ENCODE measurements at regions of chr12 and their contacts with region 1.

Region 1: DNA sequence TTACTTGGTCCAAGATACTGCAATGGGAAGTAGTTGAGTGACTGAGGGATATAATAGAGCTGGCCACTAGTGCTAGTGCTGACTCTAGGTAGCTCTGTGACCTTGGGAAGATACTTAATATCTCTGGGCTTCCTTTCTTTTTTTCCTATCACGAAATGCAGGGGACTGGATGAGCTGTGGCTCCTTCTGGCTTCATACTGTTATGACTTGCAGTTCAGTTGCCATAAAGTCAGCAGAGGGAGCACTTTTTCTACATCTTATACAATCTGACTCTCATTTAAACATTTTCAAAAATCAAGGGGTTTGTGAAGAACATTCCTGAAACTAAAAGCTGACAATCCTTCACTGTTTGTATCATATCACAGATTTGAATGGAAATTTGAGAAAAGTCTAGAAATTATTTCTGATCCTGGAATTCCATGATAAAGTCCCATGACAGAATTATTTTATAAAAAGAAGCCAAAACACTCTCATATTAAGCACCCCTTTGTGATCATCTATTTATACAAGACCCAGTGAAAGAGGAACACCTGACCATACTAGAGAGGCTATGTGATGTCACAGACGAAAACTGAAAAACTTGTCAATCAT is 5.4 kb downstream of the BHLHE41 start:
- DNase-seq: peak; percentile 70
- ATAC-seq: no peak
- H3K4me3 ChIP-seq: no peak overlapping the region
- H3K4me3 Mint-ChIP-seq: peak overlapping the region; percentile 53
- H3K27ac ChIP-seq: peak overlapping the region in 1 of 2 donors; percentile 6
- H3K27ac Mint-ChIP-seq: peak overlapping the region; percentile 57
- H3K4me1 ChIP-seq: peaks cover 66 to 72% of the 10 kb centered on the region in 2 donors
- H3K4me1 Mint-ChIP-seq: peaks cover 74% of the 10 kb centered on the region
- H3K27me3 ChIP-seq: peaks cover 0 to 10% (median 0%) of the 10 kb centered on the region in 4 experiments
- H3K27me3 Mint-ChIP-seq: no peaks in the 10 kb centered on the region
- CTCF ChIP-seq: peak; percentile 62

Region 2: GRCh38 chr12:26077915-26078702 is 41.4 kb before region 1 on chr12:
- CTCF ChIA-PET with region 1: no interaction called
- POLR2A ChIA-PET with region 1: no interaction called
- intact Hi-C with region 1: no loop called
- DNase-seq: no peak
- ATAC-seq: no peak
- H3K4me3 ChIP-seq: no peak overlapping the region
- H3K4me3 Mint-ChIP-seq: no peak overlapping the region
- H3K27ac ChIP-seq: no peak overlapping the region
- H3K27ac Mint-ChIP-seq: no peak overlapping the region
- H3K4me1 ChIP-seq: no peaks in the 10 kb centered on the region
- H3K4me1 Mint-ChIP-seq: no peaks in the 10 kb centered on the region
- H3K27me3 ChIP-seq: no peaks in the 10 kb centered on the region
- H3K27me3 Mint-ChIP-seq: no peaks in the 10 kb centered on the region
- CTCF ChIP-seq: no peak

Region 3: GRCh38 chr12:26153421-26154154 is 34.1 kb after region 1 on chr12:
- CTCF ChIA-PET with region 1: interaction called, 72 read pairs
- POLR2A ChIA-PET with region 1: interaction called, 117 read pairs
- intact Hi-C with region 1: no loop called
- DNase-seq: no peak
- ATAC-seq: no peak
- H3K4me3 ChIP-seq: no peak overlapping the region
- H3K4me3 Mint-ChIP-seq: no peak overlapping the region
- H3K27ac ChIP-seq: peak overlapping the region; percentile 14 to 88
- H3K27ac Mint-ChIP-seq: peak overlapping the region; percentile 99
- H3K4me1 ChIP-seq: peaks cover 60 to 65% of the 10 kb centered on the region in 2 donors
- H3K4me1 Mint-ChIP-seq: peaks cover 82% of the 10 kb centered on the region
- H3K27me3 ChIP-seq: no peaks in the 10 kb centered on the region
- H3K27me3 Mint-ChIP-seq: no peaks in the 10 kb centered on the region
- CTCF ChIP-seq: no peak

Region 4: GRCh38 chr12:26327975-26328644 is 208.6 kb after region 1 on chr12:
- CTCF ChIA-PET with region 1: no interaction called
- POLR2A ChIA-PET with region 1: no interaction called
- intact Hi-C with region 1: loop called (anchors 5 kb)
- DNase-seq: peak; percentile 71
- ATAC-seq: peak; percentile 89
- H3K4me3 ChIP-seq: no peak overlapping the region
- H3K4me3 Mint-ChIP-seq: peak overlapping the region; percentile 42
- H3K27ac ChIP-seq: peak overlapping the region; percentile 1 to 69
- H3K27ac Mint-ChIP-seq: peak overlapping the region; percentile 73
- H3K4me1 ChIP-seq: peaks cover 13 to 19% of the 10 kb centered on the region in 2 donors
- H3K4me1 Mint-ChIP-seq: peaks cover 24% of the 10 kb centered on the region
- H3K27me3 ChIP-seq: no peaks in the 10 kb centered on the region
- H3K27me3 Mint-ChIP-seq: no peaks in the 10 kb centered on the region
- CTCF ChIP-seq: no peak

Region 5: GRCh38 chr12:26434299-26435068 is 315.0 kb after region 1 on chr12:
- CTCF ChIA-PET with region 1: interaction called, 12 read pairs
- POLR2A ChIA-PET with region 1: no interaction called
- intact Hi-C with region 1: loop called (anchors 5 kb)
- DNase-seq: peak; percentile 61
- ATAC-seq: peak; percentile 61
- H3K4me3 ChIP-seq: no peak overlapping the region
- H3K4me3 Mint-ChIP-seq: no peak overlapping the region
- H3K27ac ChIP-seq: no peak overlapping the region
- H3K27ac Mint-ChIP-seq: peak overlapping the region; percentile 11
- H3K4me1 ChIP-seq: no peaks in the 10 kb centered on the region
- H3K4me1 Mint-ChIP-seq: no peaks in the 10 kb centered on the region
- H3K27me3 ChIP-seq: no peaks in the 10 kb centered on the region
- H3K27me3 Mint-ChIP-seq: no peaks in the 10 kb centered on the region
- CTCF ChIP-seq: peak; percentile 83

Region 6: DNA sequence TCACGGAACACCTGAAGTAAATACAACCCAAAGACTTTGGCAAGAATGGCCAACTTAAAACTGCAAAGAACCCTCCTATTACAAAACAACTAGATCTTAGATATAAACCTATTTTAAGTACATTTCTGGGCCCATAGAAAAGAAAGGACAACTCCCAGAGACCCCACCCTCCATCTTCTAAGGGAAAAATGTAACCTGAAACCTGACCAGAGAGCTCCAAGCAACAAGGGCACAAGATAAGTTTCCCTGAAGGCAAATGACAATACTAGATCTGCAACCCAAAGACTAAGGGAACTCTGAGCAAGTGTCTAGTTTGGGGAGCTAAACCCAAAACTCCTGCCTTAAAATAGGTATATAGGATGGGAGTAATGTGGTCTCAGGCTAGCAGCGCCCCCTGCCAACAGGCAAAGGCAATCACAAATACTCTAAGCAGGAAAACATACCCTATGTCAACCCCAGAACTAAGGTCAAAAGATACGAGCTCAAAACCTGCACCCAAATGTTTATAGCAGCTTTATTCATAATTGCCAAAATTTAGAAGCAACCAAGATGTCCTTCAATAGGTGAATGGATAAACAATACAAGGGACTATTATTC is 494.6 kb after region 1 on chr12:
- CTCF ChIA-PET with region 1: interaction called, 18 read pairs
- POLR2A ChIA-PET with region 1: no interaction called
- intact Hi-C with region 1: loop called (anchors 5 kb)
- DNase-seq: peak; percentile 51
- ATAC-seq: no peak
- H3K4me3 ChIP-seq: no peak overlapping the region
- H3K4me3 Mint-ChIP-seq: no peak overlapping the region
- H3K27ac ChIP-seq: no peak overlapping the region
- H3K27ac Mint-ChIP-seq: no peak overlapping the region
- H3K4me1 ChIP-seq: no peaks in the 10 kb centered on the region
- H3K4me1 Mint-ChIP-seq: no peaks in the 10 kb centered on the region
- H3K27me3 ChIP-seq: no peaks in the 10 kb centered on the region
- H3K27me3 Mint-ChIP-seq: no peaks in the 10 kb centered on the region
- CTCF ChIP-seq: peak; percentile 58

Region 7: DNA sequence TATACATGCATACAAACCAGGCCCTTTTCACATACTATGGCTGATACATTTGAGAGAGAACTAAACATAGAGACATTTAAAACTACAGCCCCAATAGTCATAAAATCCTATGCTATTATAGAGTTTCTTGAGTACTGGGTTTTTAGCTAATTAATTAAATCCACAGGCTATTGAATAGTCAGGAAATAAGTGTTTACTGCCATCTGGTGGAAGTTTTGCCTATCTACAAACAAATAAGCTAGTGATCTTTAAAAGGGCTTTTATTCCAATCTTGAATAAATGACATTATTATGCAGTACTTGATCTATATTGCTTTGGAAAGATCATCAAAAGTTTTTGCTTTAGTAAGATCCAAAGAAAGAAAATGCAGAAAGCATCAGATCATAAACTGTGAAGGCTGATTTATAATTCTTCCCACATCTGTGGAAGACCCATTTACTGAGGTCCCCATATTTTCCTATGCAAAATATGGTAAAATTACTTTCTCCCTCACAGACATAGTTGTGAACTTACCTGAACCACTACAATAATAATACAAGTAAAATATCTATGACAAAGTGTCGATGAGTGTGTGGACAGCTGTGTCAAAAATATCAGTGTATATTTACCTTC is 582.2 kb after region 1 on chr12:
- CTCF ChIA-PET with region 1: interaction called, 10 read pairs
- POLR2A ChIA-PET with region 1: no interaction called
- intact Hi-C with region 1: no loop called
- DNase-seq: peak; percentile 55
- ATAC-seq: no peak
- H3K4me3 ChIP-seq: no peak overlapping the region
- H3K4me3 Mint-ChIP-seq: no peak overlapping the region
- H3K27ac ChIP-seq: no peak overlapping the region
- H3K27ac Mint-ChIP-seq: no peak overlapping the region
- H3K4me1 ChIP-seq: peaks cover 11 to 14% of the 10 kb centered on the region in 2 donors
- H3K4me1 Mint-ChIP-seq: peaks cover 9% of the 10 kb centered on the region
- H3K27me3 ChIP-seq: no peaks in the 10 kb centered on the region
- H3K27me3 Mint-ChIP-seq: no peaks in the 10 kb centered on the region
- CTCF ChIP-seq: peak; percentile 87

Measured in B cell (primary cell).